PC-3 (cell line): ENCODE measurements at regions of chr6 and their contacts with region 1.

Region 1: DNA sequence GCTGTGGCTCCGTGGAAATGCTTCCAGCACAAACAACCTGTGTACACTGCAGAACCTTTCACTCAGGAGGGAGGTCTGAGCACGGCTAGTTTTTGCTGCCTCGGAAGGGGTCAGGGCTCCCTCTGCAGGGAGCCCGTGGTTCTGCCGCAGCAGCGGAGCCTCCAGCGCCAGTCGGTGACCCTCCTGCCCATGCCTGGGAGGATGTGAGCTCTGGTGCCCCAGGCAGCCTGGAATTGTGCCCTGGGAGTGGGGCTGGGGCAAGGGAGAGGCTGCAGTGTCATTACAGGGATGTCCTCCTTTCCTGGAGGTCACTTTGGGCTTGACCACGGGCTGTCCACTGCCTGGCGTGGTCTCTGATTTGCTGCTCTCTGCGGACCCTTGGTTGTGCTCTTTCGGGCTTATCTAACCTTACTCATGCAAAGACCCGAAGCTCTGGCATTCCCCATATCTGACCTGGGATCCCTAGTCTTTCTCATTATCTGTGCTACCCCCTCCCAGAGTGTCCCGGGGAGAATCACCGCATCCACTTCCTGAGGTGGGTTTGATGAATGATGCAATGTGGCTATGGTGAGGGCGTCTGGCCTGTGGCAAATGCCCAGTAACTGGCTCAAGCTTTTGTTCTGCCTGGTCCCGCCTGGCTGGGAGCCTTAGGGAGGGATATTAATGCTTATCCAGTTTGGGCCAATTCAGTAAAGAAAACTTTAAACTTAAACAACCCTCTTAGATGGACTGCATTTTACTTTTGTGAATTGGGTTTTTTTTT is 59.6 kb upstream of the TAGAP start:
- DNase-seq: peak; percentile 69
- ATAC-seq: peak; percentile 96
- H3K4me3 ChIP-seq: no peak overlapping the region
- H3K27ac ChIP-seq: no peak overlapping the region
- H3K4me1 ChIP-seq: no peaks in the 10 kb centered on the region
- H3K27me3 ChIP-seq: no peaks in the 10 kb centered on the region
- CTCF ChIP-seq: peak; percentile 83

Region 2: DNA sequence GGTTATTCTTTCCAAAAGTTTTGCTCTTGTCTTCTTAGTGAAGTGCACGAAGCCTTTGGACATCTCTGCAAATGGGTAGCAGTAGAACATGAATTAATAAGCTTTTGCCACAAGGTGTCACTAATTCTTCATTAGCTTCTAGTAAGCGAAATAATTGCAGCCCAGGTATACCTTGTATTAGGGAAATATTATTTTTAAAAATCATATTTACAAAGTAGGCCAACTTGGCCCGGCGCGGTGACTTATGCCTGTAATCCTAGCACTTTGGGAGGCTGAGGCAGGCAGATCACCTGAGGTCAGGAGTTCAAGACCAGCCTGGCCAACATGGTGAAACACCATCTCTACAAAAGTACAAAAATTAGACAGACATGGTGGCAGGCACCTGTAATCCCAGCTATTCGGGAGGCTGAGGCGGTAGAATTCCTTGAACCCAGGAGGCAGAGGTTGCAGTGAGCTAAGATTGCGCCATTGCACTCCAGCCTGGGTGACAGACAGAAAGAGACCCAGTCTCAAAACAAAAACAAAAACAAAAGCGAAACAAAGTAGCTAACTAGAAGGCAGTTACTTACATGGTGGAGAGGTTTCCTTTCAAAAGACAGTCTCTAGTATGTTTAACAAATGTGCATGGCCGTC is 95.6 kb before region 1 on chr6:
- CTCF ChIA-PET with region 1: interaction called, 6 read pairs
- POLR2A ChIA-PET with region 1: no interaction called
- intact Hi-C with region 1: loop called (anchors 1 kb)
- DNase-seq: peak; percentile 54
- ATAC-seq: peak; percentile 64
- H3K4me3 ChIP-seq: no peak overlapping the region
- H3K27ac ChIP-seq: no peak overlapping the region
- H3K4me1 ChIP-seq: no peaks in the 10 kb centered on the region
- H3K27me3 ChIP-seq: no peaks in the 10 kb centered on the region
- CTCF ChIP-seq: peak; percentile 58

Region 3: GRCh38 chr6:159042003-159042825 is 62.1 kb before region 1 on chr6:
- CTCF ChIA-PET with region 1: no interaction called
- POLR2A ChIA-PET with region 1: no interaction called
- intact Hi-C with region 1: loop called (anchors 1 kb)
- DNase-seq: peak; percentile 84
- ATAC-seq: peak; percentile 84
- H3K4me3 ChIP-seq: 0 out of 2 replicates have a peak overlapping the region, but pooled peaks have one; percentile 22
- H3K27ac ChIP-seq: no peak overlapping the region
- H3K4me1 ChIP-seq: peaks cover 25% of the 10 kb centered on the region
- H3K27me3 ChIP-seq: peaks cover 23% of the 10 kb centered on the region; the same call in 1 of the 2 replicates
- CTCF ChIP-seq: peak; percentile 94